Activated CD8-positive, alpha-beta T cell treated with anti-CD3 and anti-CD28 coated beads for 36 hours (primary cell): ENCODE measurements at regions of chr1 and their contacts with region 1.

Region 1: GRCh38 chr1:160755911-160756848 is 17.1 kb downstream of the SLAMF7 start:
- DNase-seq: peak; percentile 70
- ATAC-seq: peak; percentile 68
- H3K4me3 Mint-ChIP-seq: peak overlapping the region; percentile 40
- H3K27ac Mint-ChIP-seq: peak overlapping the region; percentile 95
- H3K4me1 Mint-ChIP-seq: peaks cover 73% of the 10 kb centered on the region
- H3K27me3 Mint-ChIP-seq: no peaks in the 10 kb centered on the region
- CTCF ChIP-seq: no peak

Region 2: DNA sequence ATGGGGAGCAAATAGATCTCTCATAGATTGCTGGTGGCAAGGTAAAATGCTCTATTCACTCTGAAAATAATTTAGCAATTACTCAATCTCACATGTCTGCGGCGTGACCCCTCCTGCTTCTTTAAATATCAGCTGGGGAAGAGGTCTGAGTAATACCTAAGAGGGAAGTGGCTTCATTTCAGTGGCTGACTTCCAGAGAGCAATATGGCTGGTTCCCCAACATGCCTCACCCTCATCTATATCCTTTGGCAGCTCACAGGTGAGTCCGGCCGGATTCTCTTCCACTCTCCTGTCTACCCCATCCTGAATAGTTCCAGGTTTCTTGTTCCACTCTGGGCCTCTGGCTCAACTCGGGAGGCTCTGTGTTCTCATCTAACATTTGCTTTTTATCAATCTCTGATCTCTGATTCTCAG is 17.1 kb before region 1 on chr1 and contains the start of gene SLAMF7:
- CTCF ChIA-PET with region 1: interaction called, 11 read pairs
- POLR2A ChIA-PET with region 1: interaction called, 35 read pairs
- intact Hi-C with region 1: no loop called
- DNase-seq: peak; percentile 82
- ATAC-seq: peak; percentile 75
- H3K4me3 Mint-ChIP-seq: peak within 1 kb of the TSS; percentile 84
- H3K27ac Mint-ChIP-seq: peak within 1 kb of the TSS; percentile 94
- H3K4me1 Mint-ChIP-seq: peaks cover 75% of the 10 kb centered on the region
- H3K27me3 Mint-ChIP-seq: no peaks in the 10 kb centered on the region
- CTCF ChIP-seq: no peak
- total RNA-seq, gene SLAMF7: 90.0 to 93.5 TPM

Region 3: GRCh38 chr1:160789702-160790611 is 33.8 kb after region 1 on chr1:
- CTCF ChIA-PET with region 1: no interaction called
- POLR2A ChIA-PET with region 1: no interaction called
- intact Hi-C with region 1: no loop called
- DNase-seq: no peak
- ATAC-seq: no peak
- H3K4me3 Mint-ChIP-seq: no peak overlapping the region
- H3K27ac Mint-ChIP-seq: no peak overlapping the region
- H3K4me1 Mint-ChIP-seq: peaks cover 7% of the 10 kb centered on the region
- H3K27me3 Mint-ChIP-seq: no peaks in the 10 kb centered on the region
- CTCF ChIP-seq: no peak